B cell (primary cell): ENCODE measurements at regions of chr22 and their contacts with region 1.

Region 1: DNA sequence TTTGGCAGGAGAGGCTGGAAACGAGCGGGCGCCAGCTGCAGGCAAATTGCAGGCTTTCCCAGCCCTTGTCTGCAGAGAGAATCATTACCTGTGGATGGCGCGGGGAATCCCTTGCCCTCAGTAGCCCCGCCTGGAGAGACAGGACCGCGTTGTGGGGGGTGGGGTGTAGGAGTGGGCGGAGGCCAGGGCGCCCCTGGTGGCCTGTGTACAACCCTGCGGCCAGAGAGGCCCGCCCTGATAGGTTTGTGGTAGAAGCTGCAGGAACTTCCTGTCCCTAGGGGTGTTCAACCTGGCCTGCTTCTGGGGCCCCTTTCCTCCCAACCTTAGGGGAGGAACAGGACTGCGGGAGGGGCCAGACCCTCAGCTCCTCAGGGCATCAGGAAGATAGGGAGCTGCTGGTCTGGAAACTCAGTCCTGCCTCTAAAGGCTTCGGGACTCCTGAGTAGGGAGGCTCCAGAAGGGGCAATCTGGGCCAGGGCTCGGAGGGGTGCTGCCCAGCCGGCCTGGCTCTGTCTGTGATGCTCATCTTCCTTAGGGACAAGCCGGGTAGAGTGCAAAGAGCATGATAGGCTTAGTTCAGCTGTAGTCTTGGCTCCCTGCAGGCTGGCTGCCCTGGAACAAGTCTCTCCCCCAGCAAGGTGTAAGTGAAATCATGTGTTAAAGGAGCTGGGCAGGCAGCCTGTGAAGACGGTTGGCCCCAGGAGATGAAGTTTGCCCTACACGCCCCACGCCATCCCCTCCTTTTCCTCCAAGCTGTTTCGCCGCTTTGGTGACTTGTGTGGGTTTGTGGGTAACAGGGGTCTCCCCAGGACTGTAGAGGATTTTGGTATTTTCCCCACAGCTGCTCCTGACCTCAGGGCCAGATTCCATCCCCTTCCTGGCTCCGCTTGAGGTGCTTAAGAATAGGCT is 24.1 kb upstream of the SUSD2 start:
- DNase-seq: peak; percentile 92
- ATAC-seq: peak; percentile 85
- H3K4me3 ChIP-seq: peak overlapping the region; percentile 73 to 99 (median 90)
- H3K4me3 Mint-ChIP-seq: peak overlapping the region; percentile 96
- H3K27ac ChIP-seq: peak overlapping the region; percentile 66 to 75
- H3K27ac Mint-ChIP-seq: peak overlapping the region; percentile 95
- H3K4me1 ChIP-seq: peaks cover 54 to 74% of the 10 kb centered on the region in 2 donors
- H3K4me1 Mint-ChIP-seq: peaks cover 63% of the 10 kb centered on the region
- H3K27me3 ChIP-seq: no peaks in the 10 kb centered on the region
- H3K27me3 Mint-ChIP-seq: no peaks in the 10 kb centered on the region
- CTCF ChIP-seq: peak; percentile 88

Region 2: DNA sequence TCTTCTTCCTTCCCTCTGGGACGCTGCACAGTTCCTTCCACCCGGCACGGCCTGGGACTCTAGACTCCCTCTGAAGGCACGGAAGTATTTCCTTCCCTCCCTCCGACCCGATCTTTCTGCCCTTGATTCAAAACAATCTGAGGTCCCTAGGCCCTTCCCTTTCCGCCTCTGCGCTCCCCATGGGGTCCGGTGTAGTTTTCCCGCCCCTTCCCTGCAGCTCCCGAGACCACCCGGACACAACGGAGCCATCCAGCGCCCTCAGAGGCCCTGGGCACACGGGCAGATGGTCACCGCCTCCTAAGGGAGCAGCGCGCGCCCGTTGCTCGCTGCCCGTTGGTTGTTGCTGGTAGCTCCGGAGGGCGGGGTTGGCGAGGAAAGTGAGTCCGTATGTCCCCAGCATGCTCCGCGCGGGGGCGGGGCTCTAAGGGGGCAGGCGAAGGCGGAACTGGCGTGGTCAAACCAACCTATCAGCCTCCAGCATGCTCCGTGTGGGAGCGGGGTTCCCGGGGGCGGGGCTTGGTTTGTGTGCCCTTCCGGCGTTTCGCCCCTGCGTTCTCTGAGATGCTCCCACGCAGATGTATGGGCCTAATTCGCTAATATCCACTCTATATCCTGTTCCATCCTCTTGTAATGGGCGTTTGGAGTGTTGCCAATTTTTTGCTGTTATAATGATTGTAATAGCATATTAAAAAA is 243.4 kb before region 1 on chr22:
- CTCF ChIA-PET with region 1: interaction called, 3 read pairs
- POLR2A ChIA-PET with region 1: no interaction called
- intact Hi-C with region 1: loop called (anchors 1 kb)
- DNase-seq: peak; percentile 98
- ATAC-seq: peak; percentile 99
- H3K4me3 ChIP-seq: peak overlapping the region; percentile 52 to 96 (median 68)
- H3K4me3 Mint-ChIP-seq: peak overlapping the region; percentile 98
- H3K27ac ChIP-seq: peak overlapping the region; percentile 68 to 92
- H3K27ac Mint-ChIP-seq: peak overlapping the region; percentile 98
- H3K4me1 ChIP-seq: peaks cover 21 to 24% of the 10 kb centered on the region in 2 donors
- H3K4me1 Mint-ChIP-seq: peaks cover 31% of the 10 kb centered on the region
- H3K27me3 ChIP-seq: no peaks in the 10 kb centered on the region
- H3K27me3 Mint-ChIP-seq: no peaks in the 10 kb centered on the region
- CTCF ChIP-seq: no peak

Region 3: GRCh38 chr22:24106385-24107381 is 50.5 kb before region 1 on chr22:
- CTCF ChIA-PET with region 1: interaction called, 15 read pairs
- POLR2A ChIA-PET with region 1: no interaction called
- intact Hi-C with region 1: no loop called
- DNase-seq: peak; percentile 66
- ATAC-seq: peak; percentile 69
- H3K4me3 ChIP-seq: no peak overlapping the region
- H3K4me3 Mint-ChIP-seq: no peak overlapping the region
- H3K27ac ChIP-seq: no peak overlapping the region
- H3K27ac Mint-ChIP-seq: peak overlapping the region; percentile 37
- H3K4me1 ChIP-seq: no peaks in the 10 kb centered on the region
- H3K4me1 Mint-ChIP-seq: no peaks in the 10 kb centered on the region
- H3K27me3 ChIP-seq: no peaks in the 10 kb centered on the region
- H3K27me3 Mint-ChIP-seq: no peaks in the 10 kb centered on the region
- CTCF ChIP-seq: peak; percentile 63

Region 4: DNA sequence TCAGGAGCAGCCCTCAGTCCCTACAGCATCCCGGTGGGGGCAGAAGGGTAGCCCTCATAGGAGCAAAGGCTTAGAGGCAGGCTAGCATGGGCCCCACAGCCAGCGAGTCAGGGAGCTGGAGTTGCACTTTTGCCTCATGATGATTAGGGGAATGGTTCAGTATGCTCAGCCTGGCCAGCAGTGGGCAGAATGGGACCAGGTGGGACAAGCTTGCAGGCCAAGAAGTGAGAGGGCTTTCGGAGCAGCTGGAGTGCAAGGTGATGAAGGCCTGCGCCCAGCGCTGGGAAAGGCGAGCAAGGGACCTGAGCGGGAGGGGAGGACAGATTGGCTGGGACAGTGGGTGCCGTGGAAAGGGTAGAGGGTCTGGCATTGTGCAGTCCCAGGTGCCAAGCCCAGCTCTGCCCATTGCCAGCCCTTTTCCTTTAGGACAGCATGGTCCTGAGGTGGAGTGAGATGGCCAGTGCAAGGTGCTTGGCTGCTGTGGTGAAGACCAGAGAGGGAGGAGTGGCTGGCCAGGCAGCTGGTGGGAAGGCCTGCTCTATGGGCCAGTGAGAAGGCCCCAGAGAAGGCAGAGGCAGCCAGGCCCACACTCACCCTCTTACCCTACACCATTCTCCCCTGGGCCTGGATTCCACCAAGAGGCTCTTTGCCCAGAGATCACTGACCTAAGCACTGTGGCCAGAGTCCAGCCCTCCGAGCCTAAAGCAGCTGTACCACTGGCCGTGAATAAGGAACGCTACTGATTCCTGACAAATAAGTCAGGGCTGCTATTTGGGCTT is 23.8 kb before region 1 on chr22:
- CTCF ChIA-PET with region 1: interaction called, 23 read pairs
- POLR2A ChIA-PET with region 1: no interaction called
- intact Hi-C with region 1: no loop called
- DNase-seq: peak; percentile 43
- ATAC-seq: no peak
- H3K4me3 ChIP-seq: no peak overlapping the region
- H3K4me3 Mint-ChIP-seq: no peak overlapping the region
- H3K27ac ChIP-seq: peak overlapping the region in 1 of 2 donors; percentile 19
- H3K27ac Mint-ChIP-seq: peak overlapping the region; percentile 32
- H3K4me1 ChIP-seq: peaks cover 7 to 26% of the 10 kb centered on the region in 2 donors
- H3K4me1 Mint-ChIP-seq: peaks cover 24% of the 10 kb centered on the region
- H3K27me3 ChIP-seq: no peaks in the 10 kb centered on the region
- H3K27me3 Mint-ChIP-seq: no peaks in the 10 kb centered on the region
- CTCF ChIP-seq: peak; percentile 12

Region 5: GRCh38 chr22:24175160-24175808 is 18.1 kb after region 1 on chr22:
- CTCF ChIA-PET with region 1: interaction called, 77 read pairs
- POLR2A ChIA-PET with region 1: interaction called, 5 read pairs
- intact Hi-C with region 1: no loop called
- DNase-seq: peak; percentile 69
- ATAC-seq: peak; percentile 73
- H3K4me3 ChIP-seq: no peak overlapping the region
- H3K4me3 Mint-ChIP-seq: no peak overlapping the region
- H3K27ac ChIP-seq: no peak overlapping the region
- H3K27ac Mint-ChIP-seq: peak overlapping the region; percentile 67
- H3K4me1 ChIP-seq: no peaks in the 10 kb centered on the region
- H3K4me1 Mint-ChIP-seq: no peaks in the 10 kb centered on the region
- H3K27me3 ChIP-seq: no peaks in the 10 kb centered on the region
- H3K27me3 Mint-ChIP-seq: no peaks in the 10 kb centered on the region
- CTCF ChIP-seq: peak; percentile 71

Region 6: GRCh38 chr22:24325105-24325757 is 168.1 kb after region 1 on chr22:
- CTCF ChIA-PET with region 1: no interaction called
- POLR2A ChIA-PET with region 1: no interaction called
- intact Hi-C with region 1: no loop called
- DNase-seq: peak; percentile 71
- ATAC-seq: peak; percentile 76
- H3K4me3 ChIP-seq: no peak overlapping the region
- H3K4me3 Mint-ChIP-seq: no peak overlapping the region
- H3K27ac ChIP-seq: no peak overlapping the region
- H3K27ac Mint-ChIP-seq: peak overlapping the region; percentile 26
- H3K4me1 ChIP-seq: peaks cover 7 to 8% of the 10 kb centered on the region in 2 donors
- H3K4me1 Mint-ChIP-seq: peaks cover 19% of the 10 kb centered on the region
- H3K27me3 ChIP-seq: no peaks in the 10 kb centered on the region
- H3K27me3 Mint-ChIP-seq: no peaks in the 10 kb centered on the region
- CTCF ChIP-seq: peak; percentile 85

Region 7: DNA sequence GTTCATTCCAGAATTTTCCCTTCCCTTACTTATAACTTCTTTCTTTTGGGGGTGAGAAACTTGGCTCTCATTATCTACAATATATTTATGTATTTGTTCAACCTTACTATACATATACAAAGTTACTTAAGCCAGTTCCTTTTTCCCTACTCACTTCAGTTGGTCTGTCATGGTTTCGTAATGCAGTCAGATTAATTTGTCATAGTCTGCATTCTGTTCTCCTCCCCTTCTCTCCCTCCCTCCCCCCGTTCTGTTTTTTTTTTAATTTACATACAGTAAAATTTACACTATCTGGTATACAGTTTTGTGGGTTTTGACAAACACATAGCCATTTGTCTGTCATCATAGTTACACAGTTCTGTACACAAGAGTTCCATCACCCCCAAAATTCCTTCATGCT is 198.4 kb after region 1 on chr22:
- CTCF ChIA-PET with region 1: no interaction called
- POLR2A ChIA-PET with region 1: no interaction called
- intact Hi-C with region 1: no loop called
- DNase-seq: no peak
- ATAC-seq: no peak
- H3K4me3 ChIP-seq: no peak overlapping the region
- H3K4me3 Mint-ChIP-seq: no peak overlapping the region
- H3K27ac ChIP-seq: no peak overlapping the region
- H3K27ac Mint-ChIP-seq: no peak overlapping the region
- H3K4me1 ChIP-seq: no peaks in the 10 kb centered on the region
- H3K4me1 Mint-ChIP-seq: no peaks in the 10 kb centered on the region
- H3K27me3 ChIP-seq: no peaks in the 10 kb centered on the region
- H3K27me3 Mint-ChIP-seq: no peaks in the 10 kb centered on the region
- CTCF ChIP-seq: no peak